ENCODE measurements at regions of chr3 and their contacts with region 1.

Region 1: GRCh38 chr3:149067883-149068282 is 18.4 kb downstream of the HLTF start:
- DNase-seq: no peak

Region 2: GRCh38 chr3:149044339-149045083 is 23.4 kb before region 1 on chr3:
- intact Hi-C with region 1: loop called in 1 of 2 experiments (anchors 1 kb)
- DNase-seq: no peak

Measured in posterior vena cava (tissue), 2 donors.